Sciatic nerve (tissue), 2 donors: ENCODE measurements at regions of chr2 and their contacts with region 1.

Region 1: DNA sequence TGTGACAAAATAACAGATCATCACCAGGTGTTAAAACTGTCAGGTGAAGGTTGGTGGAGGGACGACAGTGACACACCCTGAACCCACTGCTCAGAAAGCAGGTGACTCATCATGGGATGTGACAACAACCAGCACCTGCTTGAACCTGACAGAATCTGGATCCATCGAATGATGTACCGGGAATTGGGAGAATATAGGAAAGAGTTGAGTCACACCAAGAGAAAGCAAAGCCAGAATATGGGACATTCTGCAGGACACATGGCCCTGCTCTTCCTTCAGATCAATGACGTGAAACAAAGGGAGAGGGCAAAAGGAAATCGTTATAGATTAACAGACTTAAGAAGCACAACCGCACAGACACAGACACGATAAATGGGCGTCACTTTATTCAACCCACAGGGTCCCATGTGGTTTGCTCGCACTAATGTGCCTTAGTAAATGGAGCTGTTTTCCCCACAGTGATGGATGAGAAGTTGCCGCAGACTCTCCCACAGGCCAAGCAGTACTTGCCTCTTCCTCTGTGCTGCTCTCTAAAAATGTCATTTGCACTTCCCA is 100.1 kb downstream of the CRACDL start:
- DNase-seq: no peak
- ATAC-seq: no peak

Region 2: GRCh38 chr2:98654699-98655495 is 181.0 kb before region 1 on chr2:
- intact Hi-C with region 1: loop called (anchors 5 kb)
- DNase-seq: no peak
- ATAC-seq: no peak

Region 3: DNA sequence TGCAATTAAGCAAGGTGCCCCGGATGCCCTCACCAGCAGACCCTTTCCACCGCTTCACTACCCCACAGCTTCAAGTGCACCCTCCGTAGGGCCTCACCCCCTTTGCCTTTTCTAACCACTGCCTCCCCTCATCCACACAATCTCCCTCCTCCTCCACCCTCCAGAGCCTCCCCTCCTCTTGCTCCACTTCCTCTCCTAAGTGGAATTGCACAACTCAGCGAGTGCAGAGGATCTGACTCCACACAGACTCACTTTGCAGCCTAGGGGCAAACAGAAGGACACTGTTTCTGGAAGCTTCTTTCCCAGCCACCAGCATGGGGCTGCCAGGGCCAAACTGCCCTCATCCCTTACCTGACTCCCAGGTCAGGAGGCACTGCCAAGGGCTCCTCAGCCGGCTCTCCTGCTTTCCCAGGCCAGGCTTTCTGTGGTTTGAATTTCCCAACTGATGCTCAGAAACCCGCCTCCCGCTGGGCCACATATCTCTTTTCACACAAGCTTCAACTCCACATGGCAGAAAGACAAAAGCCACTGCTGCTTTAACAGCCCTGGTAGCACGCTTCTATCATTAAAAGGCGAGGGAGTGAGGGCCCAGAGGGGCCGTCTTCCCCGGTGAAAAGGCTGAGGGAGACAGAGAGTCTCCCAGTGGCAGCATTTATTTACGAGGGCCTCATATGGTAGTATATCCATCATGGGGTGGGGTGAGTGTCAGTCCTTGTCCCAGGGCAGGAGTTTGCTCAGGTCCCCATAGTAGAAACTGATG is 30.3 kb before region 1 on chr2:
- intact Hi-C with region 1: no loop called
- DNase-seq: no peak
- ATAC-seq: peak; percentile 72

Region 4: GRCh38 chr2:99325363-99325762 is 489.5 kb after region 1 on chr2:
- intact Hi-C with region 1: no loop called
- DNase-seq: no peak
- ATAC-seq: no peak